Tibial artery (tissue), 4 donors: ENCODE measurements at regions of chr1 and their contacts with region 1.

Region 1: GRCh38 chr1:47710329-47711071 is 272.7 kb downstream of the FOXD2 start:
- DNase-seq: peak; percentile 75 to 86
- H3K4me3 ChIP-seq: peak overlapping the region; percentile 43 to 57
- H3K27ac ChIP-seq: peak overlapping the region in 1 of 2 donors; percentile 64
- H3K4me1 ChIP-seq: peaks cover 0 to 26% (median 22%) of the 10 kb centered on the region in 4 donors
- H3K27me3 ChIP-seq: peaks cover 0 to 42% of the 10 kb centered on the region in 2 donors
- CTCF ChIP-seq: peak; percentile 98 to 100

Region 2: DNA sequence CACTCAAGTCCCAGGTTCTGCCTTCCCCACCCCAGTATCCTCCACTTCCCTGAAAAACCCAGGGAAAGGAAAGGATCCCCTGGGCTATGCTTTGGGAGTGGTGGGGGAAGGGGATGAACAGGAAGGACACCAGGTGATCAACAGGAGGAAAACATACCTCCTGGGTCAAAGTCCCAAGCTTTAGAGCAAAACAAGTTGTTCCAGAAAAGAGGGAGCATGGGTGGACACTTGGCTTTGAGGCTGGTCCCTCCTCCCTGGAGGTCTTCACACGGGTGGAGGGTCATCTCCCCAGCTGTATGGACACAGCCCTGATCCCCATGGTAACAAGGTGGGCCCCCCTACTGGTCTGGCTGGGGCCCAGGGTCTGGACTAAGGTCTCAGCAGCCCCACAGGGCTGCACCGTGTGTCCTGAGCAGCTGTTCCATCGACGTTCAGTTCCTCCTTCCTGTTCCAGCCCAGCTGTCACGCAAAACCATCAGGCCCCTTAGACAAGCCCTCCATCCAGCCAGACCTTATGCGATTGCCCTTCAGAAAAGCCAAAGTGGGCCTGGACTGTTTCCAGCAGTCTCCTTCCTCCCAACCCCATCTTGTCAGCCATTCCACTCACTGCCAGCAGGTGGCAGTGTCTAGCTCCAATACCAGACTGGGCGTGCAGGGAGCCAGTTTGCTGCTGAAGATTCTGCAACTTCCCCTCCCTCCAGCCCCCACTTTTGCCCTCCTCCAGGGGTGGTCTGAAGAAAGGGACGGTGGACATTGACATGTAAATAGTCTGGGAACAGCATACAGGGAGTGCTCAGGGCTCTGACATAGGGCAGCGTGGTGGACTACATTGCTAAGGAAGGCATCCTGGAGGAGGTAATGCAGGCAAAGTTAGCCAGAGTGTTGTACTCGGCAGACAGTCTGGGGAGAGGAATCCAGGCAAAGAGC is 517.8 kb before region 1 on chr1:
- intact Hi-C with region 1: loop called (anchors 10 kb)
- DNase-seq: peak; percentile 82 to 85
- H3K4me3 ChIP-seq: no peak overlapping the region
- H3K27ac ChIP-seq: no peak overlapping the region
- H3K4me1 ChIP-seq: peaks cover 6 to 43% (median 33%) of the 10 kb centered on the region in 4 donors
- H3K27me3 ChIP-seq: peaks cover 0 to 3% of the 10 kb centered on the region in 2 donors
- CTCF ChIP-seq: peak; percentile 87 to 92

Region 3: GRCh38 chr1:47388891-47389238 is 321.6 kb before region 1 on chr1:
- intact Hi-C with region 1: loop called (anchors 5 kb)
- DNase-seq: peak; percentile 52 to 76
- H3K4me3 ChIP-seq: no peak overlapping the region
- H3K27ac ChIP-seq: no peak overlapping the region
- H3K4me1 ChIP-seq: peaks cover 0 to 8% (median 3%) of the 10 kb centered on the region in 4 donors
- H3K27me3 ChIP-seq: no peaks in the 10 kb centered on the region
- CTCF ChIP-seq: peak; percentile 66 to 80

Region 4: DNA sequence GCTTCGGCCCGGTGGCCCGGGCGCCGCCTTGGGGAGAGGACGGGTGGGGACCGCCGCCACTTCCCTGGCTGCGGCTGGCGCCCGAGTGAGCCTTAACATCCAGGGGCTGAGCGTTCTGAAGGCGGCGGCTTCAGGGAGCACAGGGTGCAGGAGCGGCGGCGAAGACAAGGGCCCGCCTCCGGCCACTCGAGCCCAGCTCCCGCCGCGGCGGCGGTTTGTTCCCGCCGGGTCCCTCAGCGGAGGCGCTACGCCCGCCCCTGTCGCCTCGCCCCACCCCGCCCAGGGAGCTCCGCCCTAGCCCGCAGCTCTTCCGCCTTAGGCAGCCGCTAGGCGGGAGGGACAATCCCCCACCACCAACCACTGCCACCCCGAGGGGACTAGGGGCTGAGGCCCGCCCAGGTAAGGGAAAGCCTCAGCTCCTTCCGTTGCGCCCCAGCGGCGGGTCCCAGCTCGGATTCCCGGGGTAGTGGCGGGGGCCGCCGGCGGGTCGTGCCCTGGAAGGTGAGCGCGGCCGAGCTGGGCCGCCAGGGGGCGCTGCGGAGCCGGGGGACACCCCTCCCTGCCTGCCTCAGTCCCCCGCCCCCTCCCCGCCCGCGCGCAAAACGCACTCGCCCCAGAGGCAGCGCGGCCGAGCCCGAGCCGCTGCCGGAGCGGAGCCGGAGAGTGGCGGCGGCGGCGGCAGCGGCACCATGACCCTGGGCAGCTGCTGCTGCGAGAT is 272.9 kb before region 1 on chr1 and contains the start of gene FOXD2:
- intact Hi-C with region 1: loop called (anchors 2 kb)
- DNase-seq: peak; percentile 77 to 93
- H3K4me3 ChIP-seq: peak within 1 kb of the TSS; percentile 76 to 85
- H3K27ac ChIP-seq: peak within 1 kb of the TSS; percentile 86 to 89
- H3K4me1 ChIP-seq: peaks cover 0 to 61% (median 38%) of the 10 kb centered on the region in 4 donors
- H3K27me3 ChIP-seq: peaks cover 0 to 21% of the 10 kb centered on the region in 2 donors
- CTCF ChIP-seq: peak; percentile 99 to 100

Region 5: DNA sequence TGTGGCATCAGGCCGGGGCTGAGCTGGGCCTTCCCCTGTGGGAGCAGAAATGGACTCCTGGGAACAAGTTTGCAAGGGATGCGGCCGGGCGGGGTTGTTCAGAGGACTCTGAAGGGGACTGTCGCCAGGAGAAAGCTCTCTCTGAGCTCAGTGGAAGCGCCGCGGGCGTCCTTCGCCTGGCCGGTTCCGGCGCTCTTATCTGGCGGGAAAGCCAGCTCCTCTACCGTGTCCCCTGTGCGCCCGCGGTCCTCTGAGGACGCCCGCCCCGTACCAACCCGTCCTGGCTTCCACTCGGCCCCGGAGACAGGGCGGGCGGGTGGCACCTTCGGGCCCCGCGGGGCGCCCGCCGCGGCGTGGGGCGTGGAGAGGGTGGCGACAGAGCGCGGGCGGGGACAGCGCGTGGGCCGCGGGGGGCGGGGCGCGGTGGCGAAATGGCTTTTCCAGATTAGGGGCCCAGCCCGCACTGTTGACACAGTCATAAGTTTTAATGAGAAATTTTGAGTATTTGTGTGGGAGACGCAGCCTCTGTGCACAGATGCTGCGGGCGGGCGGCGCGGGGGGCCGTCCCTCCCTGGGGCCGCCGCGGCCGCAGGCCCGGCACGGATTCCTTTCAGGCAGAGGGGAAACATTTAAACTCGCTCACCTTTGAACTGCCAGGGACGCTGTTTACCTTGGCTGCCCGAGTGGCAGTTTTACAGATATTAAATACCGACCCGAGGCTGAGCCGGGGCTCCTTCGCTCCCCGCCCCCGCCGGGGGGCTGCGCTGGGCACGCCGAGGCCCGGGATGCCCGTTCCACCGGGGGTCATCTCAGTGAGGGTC is 202.4 kb before region 1 on chr1:
- intact Hi-C with region 1: loop called (anchors 5 kb)
- DNase-seq: peak; percentile 26 to 80
- H3K4me3 ChIP-seq: peak overlapping the region; percentile 54 to 65
- H3K27ac ChIP-seq: peak overlapping the region; percentile 78 to 86
- H3K4me1 ChIP-seq: peaks cover 0 to 19% (median 13%) of the 10 kb centered on the region in 4 donors
- H3K27me3 ChIP-seq: no peaks in the 10 kb centered on the region
- CTCF ChIP-seq: no peak

Region 6: GRCh38 chr1:47527658-47528255 is 182.7 kb before region 1 on chr1:
- intact Hi-C with region 1: loop called (anchors 5 kb)
- DNase-seq: no peak
- H3K4me3 ChIP-seq: no peak overlapping the region
- H3K27ac ChIP-seq: no peak overlapping the region
- H3K4me1 ChIP-seq: peaks cover 0 to 10% (median 3%) of the 10 kb centered on the region in 4 donors
- H3K27me3 ChIP-seq: no peaks in the 10 kb centered on the region
- CTCF ChIP-seq: peak in 1 of 2 experiments; percentile 8